Activated CD4-positive, alpha-beta memory T cell treated with anti-CD3 and anti-CD28 coated beads, Interleukin-2, amount 10 ng/mL, durations not matched to agents 7 days and 5 days (primary cell): ENCODE measurements at regions of chr14 and their contacts with region 1.

Region 1: GRCh38 chr14:77301103-77301502 is 19.6 kb downstream of the POMT2 start:
- DNase-seq: peak; percentile 70
- H3K4me3 Mint-ChIP-seq: no peak overlapping the region
- H3K27ac Mint-ChIP-seq: no peak overlapping the region
- H3K4me1 Mint-ChIP-seq: peaks cover 25% of the 10 kb centered on the region
- H3K27me3 Mint-ChIP-seq: peaks cover 2% of the 10 kb centered on the region

Region 2: DNA sequence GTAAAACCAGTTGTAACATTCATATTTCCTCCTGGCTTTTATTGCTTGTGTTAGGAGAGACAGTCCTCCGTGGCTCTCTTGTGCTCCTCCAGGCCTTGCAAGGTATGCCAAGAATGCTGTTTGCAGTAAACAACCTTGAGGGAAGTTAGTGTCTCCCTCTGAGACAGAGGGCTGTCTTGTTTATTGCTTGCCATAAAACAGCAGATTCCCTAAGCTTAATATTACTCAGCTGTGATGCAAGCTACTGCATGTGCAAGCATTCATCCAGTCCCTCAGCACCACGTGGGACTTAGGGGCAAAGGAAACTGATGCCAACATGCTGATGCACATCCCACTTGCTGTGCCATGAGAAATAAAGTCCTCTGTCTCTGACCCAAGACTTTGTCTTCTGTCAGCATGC is 12.9 kb after region 1 on chr14:
- CTCF ChIA-PET with region 1: interaction called, 175 read pairs
- POLR2A ChIA-PET with region 1: interaction called, 29 read pairs
- DNase-seq: no peak
- H3K4me3 Mint-ChIP-seq: no peak overlapping the region
- H3K27ac Mint-ChIP-seq: no peak overlapping the region
- H3K4me1 Mint-ChIP-seq: peaks cover 3% of the 10 kb centered on the region
- H3K27me3 Mint-ChIP-seq: no peaks in the 10 kb centered on the region

Region 3: GRCh38 chr14:77320238-77320935 is 19.3 kb after region 1 on chr14 and contains the start of gene POMT2:
- CTCF ChIA-PET with region 1: interaction called, 175 read pairs
- POLR2A ChIA-PET with region 1: interaction called, 29 read pairs
- DNase-seq: peak; percentile 93
- H3K4me3 Mint-ChIP-seq: peak within 1 kb of the TSS; percentile 93
- H3K27ac Mint-ChIP-seq: peak within 1 kb of the TSS; percentile 97
- H3K4me1 Mint-ChIP-seq: peaks cover 25% of the 10 kb centered on the region
- H3K27me3 Mint-ChIP-seq: no peaks in the 10 kb centered on the region
- total RNA-seq, gene POMT2: 10.5 to 16.1 TPM

Region 4: GRCh38 chr14:77376771-77377501 is 75.8 kb after region 1 on chr14 and contains the starts of genes SAMD15 and TMED8:
- CTCF ChIA-PET with region 1: interaction called, 6 read pairs
- POLR2A ChIA-PET with region 1: interaction called, 11 read pairs
- DNase-seq: peak; percentile 86
- H3K4me3 Mint-ChIP-seq: peak within 1 kb of the TSS; percentile 87
- H3K27ac Mint-ChIP-seq: peak within 1 kb of the TSS; percentile 77
- H3K4me1 Mint-ChIP-seq: peaks cover 40% of the 10 kb centered on the region
- H3K27me3 Mint-ChIP-seq: no peaks in the 10 kb centered on the region
- total RNA-seq, gene SAMD15: 0.25 TPM in 1 of 2 experiments, not detected in the other
- total RNA-seq, gene TMED8: 21.2 to 22.2 TPM